ENCODE measurements at regions of chr19 and their contacts with region 1.

Region 1: GRCh38 chr19:38658462-38659306 is 11.2 kb downstream of the ACTN4 start:
- DNase-seq: no peak
- ATAC-seq: peak; percentile 78
- H3K4me3 ChIP-seq: peak overlapping the region; percentile 12
- H3K27ac ChIP-seq: peak overlapping the region; percentile 90
- H3K4me1 ChIP-seq: peaks cover 100% of the 10 kb centered on the region
- H3K27me3 ChIP-seq: no peaks in the 10 kb centered on the region
- CTCF ChIP-seq: no peak

Region 2: GRCh38 chr19:38707512-38708114 is 48.9 kb after region 1 on chr19:
- intact Hi-C with region 1: loop called (anchors 10 kb)
- DNase-seq: no peak
- ATAC-seq: peak; percentile 27
- H3K4me3 ChIP-seq: no peak overlapping the region
- H3K27ac ChIP-seq: peak overlapping the region; percentile 47
- H3K4me1 ChIP-seq: peaks cover 46% of the 10 kb centered on the region
- H3K27me3 ChIP-seq: no peaks in the 10 kb centered on the region
- CTCF ChIP-seq: no peak

Measured in upper lobe of right lung (tissue), 1 donor.